Motor neuron (in vitro differentiated cells): ENCODE measurements at regions of chr16 and their contacts with region 1.

Region 1: DNA sequence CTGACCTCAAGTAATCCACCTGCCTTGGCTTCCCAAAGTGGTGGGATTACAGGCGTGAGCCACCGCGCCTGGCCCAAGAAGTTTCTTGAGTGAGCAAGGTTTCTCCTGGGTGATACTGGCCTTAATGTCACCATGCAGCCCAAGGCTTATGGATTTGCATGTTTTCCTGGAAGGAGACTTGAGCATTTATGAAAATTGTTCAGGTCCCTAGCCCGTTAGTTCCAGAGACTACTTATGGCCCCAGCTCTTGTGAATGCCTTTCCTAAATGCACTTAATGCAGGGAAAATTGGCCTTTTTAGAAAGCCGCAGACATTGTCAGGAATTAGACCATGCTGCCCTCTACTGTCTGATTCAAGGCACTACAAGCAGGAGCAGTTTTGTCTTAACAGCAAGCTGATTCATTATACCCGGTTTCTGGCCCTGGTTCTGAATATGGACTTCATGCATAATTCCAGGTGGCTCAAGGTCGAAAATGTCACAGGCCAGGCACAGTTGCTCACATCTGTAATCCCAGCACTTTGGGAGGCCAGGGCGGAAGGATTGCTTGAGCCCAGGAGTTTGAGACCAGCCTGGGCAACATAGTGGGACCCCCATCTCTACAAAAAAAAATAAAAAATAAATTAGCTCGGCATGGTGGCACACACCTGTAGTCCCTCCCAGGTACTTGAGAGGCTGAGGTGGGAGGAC is 91.3 kb downstream of the SNX29 start:
- ATAC-seq: peak; percentile 65 to 94 (median 76)
- H3K4me3 ChIP-seq: no peak overlapping the region
- H3K27ac ChIP-seq: no peak overlapping the region
- H3K4me1 ChIP-seq: no peaks in the 10 kb centered on the region

Region 2: DNA sequence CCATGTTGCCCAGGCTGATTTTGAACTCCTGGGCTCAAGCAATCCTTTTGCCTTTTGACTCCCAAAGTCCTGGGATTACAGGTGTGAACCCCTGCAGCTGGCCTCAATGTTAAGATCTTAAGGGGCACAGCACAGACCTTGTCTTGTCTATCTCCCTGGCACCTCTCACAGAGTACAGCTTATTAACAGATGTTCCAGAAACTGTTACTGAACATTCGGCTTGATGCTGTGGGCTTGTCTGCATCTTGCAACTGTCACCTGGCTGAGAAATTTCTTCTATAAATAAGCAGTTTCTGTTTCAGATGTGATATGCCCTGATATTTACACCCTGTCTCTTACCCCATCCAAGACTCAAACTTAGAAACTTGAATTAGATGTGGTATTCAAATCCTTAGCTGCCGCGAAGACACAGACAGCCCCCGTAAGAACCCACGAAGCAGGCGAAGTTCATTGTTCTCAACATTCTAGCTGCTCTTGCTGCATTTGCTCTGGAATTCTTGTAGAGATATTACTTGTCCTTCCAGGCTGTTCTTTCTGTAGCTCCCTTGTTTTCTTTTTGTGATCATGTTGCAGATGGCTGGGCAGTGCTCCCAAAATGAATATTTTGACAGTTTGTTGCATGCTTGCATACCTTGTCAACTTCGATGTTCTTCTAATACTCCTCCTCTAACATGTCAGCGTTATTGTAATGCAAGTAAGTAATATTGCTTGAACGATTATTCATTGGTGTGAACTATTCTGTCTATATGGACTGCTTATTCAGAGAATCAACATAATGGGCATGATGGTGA is 102.9 kb before region 1 on chr16 and contains the start of gene TNFRSF17:
- in situ Hi-C with region 1: loop called in 1 of 9 experiments (anchors 25 kb)
- ATAC-seq: peak in 2 of 8 experiments; percentile 52
- H3K4me3 ChIP-seq: no peak within 1 kb of the TSS
- H3K27ac ChIP-seq: no peak within 1 kb of the TSS
- H3K4me1 ChIP-seq: peaks cover 4 to 5% of the 10 kb centered on the region in 2 donors
- total RNA-seq, gene TNFRSF17: 0.38 to 0.84 (median 0.45) TPM in 4 of 8 experiments, not detected in the others